ENCODE measurements at regions of chr4 and their contacts with region 1.

Region 1: GRCh38 chr4:121736735-121737351 is 28.1 kb downstream of the SMIM43 start:
- DNase-seq: peak; percentile 79
- ATAC-seq: peak; percentile 92
- H3K4me3 ChIP-seq: no peak overlapping the region
- H3K27ac ChIP-seq: no peak overlapping the region
- H3K4me1 ChIP-seq: no peaks in the 10 kb centered on the region
- H3K27me3 ChIP-seq: no peaks in the 10 kb centered on the region
- CTCF ChIP-seq: peak; percentile 77

Region 2: GRCh38 chr4:121370729-121371325 is 366.0 kb before region 1 on chr4:
- CTCF ChIA-PET with region 1: interaction called, 4 read pairs
- POLR2A ChIA-PET with region 1: no interaction called
- intact Hi-C with region 1: loop called (anchors 2 kb)
- DNase-seq: peak; percentile 59
- ATAC-seq: no peak; the same call in 1 of the 2 replicates
- H3K4me3 ChIP-seq: no peak overlapping the region
- H3K27ac ChIP-seq: no peak overlapping the region
- H3K4me1 ChIP-seq: no peaks in the 10 kb centered on the region
- H3K27me3 ChIP-seq: no peaks in the 10 kb centered on the region
- CTCF ChIP-seq: peak; percentile 70

Region 3: GRCh38 chr4:121462660-121463261 is 274.1 kb before region 1 on chr4:
- CTCF ChIA-PET with region 1: interaction called, 11 read pairs
- POLR2A ChIA-PET with region 1: no interaction called
- intact Hi-C with region 1: loop called (anchors 1 kb)
- DNase-seq: peak; percentile 73
- ATAC-seq: peak; percentile 78
- H3K4me3 ChIP-seq: no peak overlapping the region
- H3K27ac ChIP-seq: no peak overlapping the region
- H3K4me1 ChIP-seq: no peaks in the 10 kb centered on the region
- H3K27me3 ChIP-seq: peaks cover 16% of the 10 kb centered on the region
- CTCF ChIP-seq: peak; percentile 74

Region 4: DNA sequence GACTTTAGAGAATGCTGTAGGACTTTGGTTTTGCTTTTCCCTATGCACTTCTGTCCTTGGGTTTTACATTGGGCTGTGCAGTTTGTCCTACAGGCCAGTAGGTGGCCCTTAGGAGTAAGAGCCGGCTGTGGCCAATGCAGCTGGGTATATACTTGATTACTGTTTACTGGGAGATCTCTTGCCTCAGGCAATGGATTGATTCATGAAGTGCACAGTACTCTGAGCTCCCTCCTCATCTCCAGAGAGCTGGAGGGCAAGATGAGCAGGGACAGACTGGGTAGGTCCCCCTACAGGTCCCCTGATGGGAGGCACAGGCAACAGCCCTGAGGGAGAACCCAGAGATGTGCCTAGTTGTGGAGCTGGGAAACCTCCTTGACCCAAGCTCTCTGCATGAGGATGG is 252.2 kb before region 1 on chr4:
- CTCF ChIA-PET with region 1: no interaction called
- POLR2A ChIA-PET with region 1: no interaction called
- intact Hi-C with region 1: loop called (anchors 1 kb)
- DNase-seq: peak; percentile 60
- ATAC-seq: peak; percentile 88
- H3K4me3 ChIP-seq: no peak overlapping the region
- H3K27ac ChIP-seq: no peak overlapping the region
- H3K4me1 ChIP-seq: no peaks in the 10 kb centered on the region
- H3K27me3 ChIP-seq: no peaks in the 10 kb centered on the region
- CTCF ChIP-seq: peak; percentile 75

Region 5: GRCh38 chr4:121656269-121656641 is 80.6 kb before region 1 on chr4:
- CTCF ChIA-PET with region 1: no interaction called
- POLR2A ChIA-PET with region 1: no interaction called
- intact Hi-C with region 1: loop called (anchors 5 kb)
- DNase-seq: peak; percentile 62
- ATAC-seq: peak; percentile 69
- H3K4me3 ChIP-seq: no peak overlapping the region
- H3K27ac ChIP-seq: no peak overlapping the region
- H3K4me1 ChIP-seq: no peaks in the 10 kb centered on the region
- H3K27me3 ChIP-seq: no peaks in the 10 kb centered on the region
- CTCF ChIP-seq: peak; percentile 59

Region 6: GRCh38 chr4:121696581-121697461 is 40.0 kb before region 1 on chr4 and contains the start of gene ANXA5:
- CTCF ChIA-PET with region 1: interaction called, 6 read pairs
- POLR2A ChIA-PET with region 1: no interaction called
- intact Hi-C with region 1: loop called (anchors 2 kb)
- DNase-seq: peak; percentile 86
- ATAC-seq: peak; percentile 84
- H3K4me3 ChIP-seq: peak within 1 kb of the TSS; percentile 89
- H3K27ac ChIP-seq: peak within 1 kb of the TSS; percentile 90
- H3K4me1 ChIP-seq: peaks cover 21% of the 10 kb centered on the region
- H3K27me3 ChIP-seq: no peaks in the 10 kb centered on the region
- CTCF ChIP-seq: peak; percentile 30; the same call in 1 of the 2 replicates
- total RNA-seq, gene ANXA5: 271 and 280 TPM in 2 replicates